ENCODE measurements at regions of chr7 and their contacts with region 1.

Region 1: DNA sequence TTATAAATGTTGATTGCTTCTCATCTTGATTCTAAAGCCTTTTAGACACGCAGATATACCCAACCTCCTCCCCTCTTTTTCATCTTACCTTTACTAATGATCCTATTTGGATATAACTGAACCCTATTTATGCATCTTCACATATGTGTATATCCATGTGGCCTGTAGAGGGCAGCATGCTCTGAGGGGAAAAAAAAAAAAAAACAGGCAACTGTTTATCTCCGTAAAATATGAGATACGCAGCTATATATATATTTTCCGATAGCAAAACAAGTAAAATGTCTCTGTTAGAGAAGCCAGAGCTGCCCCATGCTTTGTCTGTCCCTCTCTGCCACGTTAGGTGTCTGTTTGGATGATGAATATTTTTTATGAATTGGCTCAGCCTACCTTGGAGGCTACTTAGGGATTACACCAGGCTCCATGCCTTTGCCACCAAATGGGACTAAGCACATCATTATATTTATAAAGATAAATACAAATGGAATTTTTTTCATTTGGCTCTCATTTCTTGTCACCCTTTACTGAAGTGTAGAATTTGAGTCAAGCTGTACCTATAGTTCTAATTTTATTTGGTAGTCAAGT is 174.8 kb upstream of the FZD1 start:
- DNase-seq: no peak
- H3K4me3 ChIP-seq: peak overlapping the region; percentile 18 to 29
- H3K27ac ChIP-seq: no peak overlapping the region
- H3K4me1 ChIP-seq: peaks cover 0 to 2% of the 10 kb centered on the region in 2 donors
- H3K27me3 ChIP-seq: no peaks in the 10 kb centered on the region
- CTCF ChIP-seq: peak in 2 of 3 experiments; percentile 71 to 76

Region 2: GRCh38 chr7:90677486-90678404 is 411.7 kb before region 1 on chr7:
- intact Hi-C with region 1: no loop called
- DNase-seq: no peak
- H3K4me3 ChIP-seq: no peak overlapping the region
- H3K27ac ChIP-seq: no peak overlapping the region
- H3K4me1 ChIP-seq: no peaks in the 10 kb centered on the region
- H3K27me3 ChIP-seq: no peaks in the 10 kb centered on the region
- CTCF ChIP-seq: no peak

Region 3: DNA sequence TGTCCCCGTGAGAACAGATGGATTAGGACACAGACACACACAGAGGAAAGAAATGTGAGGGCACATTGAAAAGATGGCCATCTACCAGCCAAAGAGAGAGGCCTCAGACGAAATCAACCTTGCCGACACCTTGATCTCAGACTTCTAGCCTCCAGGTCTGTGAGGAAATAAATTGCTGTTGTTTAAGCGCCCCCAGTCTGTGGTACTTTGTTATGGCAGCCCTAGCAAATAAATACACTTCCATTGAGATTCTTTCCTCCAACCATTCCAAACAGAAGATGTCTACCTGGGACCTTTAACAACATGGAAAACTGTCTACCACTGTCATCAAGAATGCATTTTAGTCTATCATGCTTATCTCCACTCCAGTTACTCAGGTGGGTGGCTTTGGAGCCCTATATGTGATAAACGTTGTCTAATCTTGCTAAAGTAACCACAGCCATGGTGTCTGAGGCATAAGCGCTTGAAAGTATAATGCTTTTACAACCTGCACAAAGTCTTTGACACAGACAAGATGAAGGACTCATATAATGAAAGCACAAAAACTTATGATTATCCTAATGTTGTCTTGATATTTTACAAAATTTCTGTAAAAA is 546.8 kb after region 1 on chr7:
- intact Hi-C with region 1: loop called (anchors 2 kb)
- DNase-seq: no peak
- H3K4me3 ChIP-seq: no peak overlapping the region
- H3K27ac ChIP-seq: no peak overlapping the region
- H3K4me1 ChIP-seq: no peaks in the 10 kb centered on the region
- H3K27me3 ChIP-seq: no peaks in the 10 kb centered on the region
- CTCF ChIP-seq: peak; percentile 22 to 50 (median 31)

Region 4: DNA sequence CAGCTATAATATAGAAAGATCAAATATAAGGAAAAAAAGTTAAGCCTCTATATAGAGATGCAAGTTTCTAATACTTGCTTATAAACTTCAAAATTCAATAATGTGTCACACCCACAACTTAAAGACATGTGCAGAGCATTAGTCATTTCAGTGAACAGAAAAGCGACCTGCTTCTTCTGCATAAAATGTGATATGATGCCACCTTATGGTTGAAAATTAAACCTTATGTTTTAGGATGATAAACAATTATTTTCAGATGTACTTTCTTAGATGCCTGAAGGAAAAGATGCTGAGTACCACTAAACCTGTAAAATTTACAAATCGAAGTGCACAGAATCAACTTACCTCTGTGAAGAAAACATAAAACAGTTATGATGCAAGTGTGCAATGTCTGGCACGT is 695.0 kb after region 1 on chr7:
- intact Hi-C with region 1: loop called (anchors 2 kb)
- DNase-seq: no peak
- H3K4me3 ChIP-seq: no peak overlapping the region
- H3K27ac ChIP-seq: no peak overlapping the region
- H3K4me1 ChIP-seq: no peaks in the 10 kb centered on the region
- H3K27me3 ChIP-seq: no peaks in the 10 kb centered on the region
- CTCF ChIP-seq: peak in 2 of 3 experiments; percentile 4 to 35